ENCODE measurements at regions of chr18 and their contacts with region 1.

Region 1: GRCh38 chr18:10912790-10913545 is 236.4 kb downstream of the PIEZO2 start:
- DNase-seq: no peak
- ATAC-seq: no peak
- H3K4me3 ChIP-seq: no peak overlapping the region
- H3K27ac ChIP-seq: no peak overlapping the region
- H3K4me1 ChIP-seq: no peaks in the 10 kb centered on the region; a peak in 1 of 5 replicates
- H3K27me3 ChIP-seq: no peaks in the 10 kb centered on the region
- CTCF ChIP-seq: no peak
- EP300 ChIP-seq: no peak
- POLR2A ChIP-seq: no peak
- RAD21 ChIP-seq: no peak

Region 2: GRCh38 chr18:12079491-12080237 is 1166.7 kb after region 1 on chr18:
- CTCF ChIA-PET with region 1: no interaction called
- POLR2A ChIA-PET with region 1: no interaction called
- in situ Hi-C with region 1: loop called (anchors 5 kb)
- intact Hi-C with region 1: no loop called
- DNase-seq: no peak
- ATAC-seq: no peak
- H3K4me3 ChIP-seq: no peak overlapping the region
- H3K27ac ChIP-seq: no peak overlapping the region
- H3K4me1 ChIP-seq: peaks cover 0 to 7% of the 10 kb centered on the region in 2 experiments; a peak in 2 of 5 replicates
- H3K27me3 ChIP-seq: peaks cover 10 to 12% of the 10 kb centered on the region in 2 experiments; a peak in 4 of 5 replicates
- CTCF ChIP-seq: no peak
- EP300 ChIP-seq: no peak
- POLR2A ChIP-seq: no peak
- RAD21 ChIP-seq: no peak

Region 3: DNA sequence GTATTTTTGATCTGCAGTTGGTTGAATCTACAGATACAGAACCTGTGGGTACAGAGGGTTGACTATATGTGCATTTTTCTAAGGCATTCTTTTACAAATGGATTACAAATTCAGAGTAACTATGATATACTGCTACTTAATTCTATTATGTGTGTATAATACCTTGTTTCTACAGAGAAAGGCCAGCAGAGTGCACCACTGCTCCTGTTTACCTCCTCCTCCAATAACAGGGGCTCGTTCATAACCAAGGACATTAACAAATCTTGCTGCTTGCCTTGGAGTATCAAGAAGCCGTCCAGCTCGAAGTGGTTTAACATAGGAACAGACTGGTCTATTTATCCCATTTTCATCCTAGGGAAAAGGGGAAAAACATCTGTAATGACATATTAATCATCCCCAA is 1773.1 kb after region 1 on chr18:
- CTCF ChIA-PET with region 1: no interaction called
- POLR2A ChIA-PET with region 1: no interaction called
- in situ Hi-C with region 1: no loop called
- intact Hi-C with region 1: no loop called
- DNase-seq: peak in 1 of 4 experiments; percentile 20
- ATAC-seq: peak; percentile 81
- H3K4me3 ChIP-seq: no peak overlapping the region
- H3K27ac ChIP-seq: no peak overlapping the region
- H3K4me1 ChIP-seq: no peaks in the 10 kb centered on the region
- H3K27me3 ChIP-seq: no peaks in the 10 kb centered on the region
- CTCF ChIP-seq: peak; percentile 13 to 36 (median 28); a peak in 1 of 6 replicates
- EP300 ChIP-seq: no peak
- POLR2A ChIP-seq: no peak
- RAD21 ChIP-seq: peak in 1 of 2 experiments; percentile 15; a peak in 1 of 4 replicates

Measured in K562 (cell line).